ENCODE measurements at regions of chr7 and their contacts with region 1.

Region 1: GRCh38 chr7:29189743-29190201 is 4.8 kb upstream of the CHN2 start:
- DNase-seq: peak; percentile 93 to 94
- H3K4me3 ChIP-seq: peak overlapping the region in 1 of 4 experiments; percentile 31; a peak in 2 of 8 replicates
- H3K27ac ChIP-seq: no peak overlapping the region
- H3K4me1 ChIP-seq: peaks cover 0 to 11% (median 7%) of the 10 kb centered on the region in 4 experiments; a peak in 4 of 7 replicates
- H3K27me3 ChIP-seq: peaks cover 14 to 36% (median 30%) of the 10 kb centered on the region in 4 experiments
- CTCF ChIP-seq: peak; percentile 91 to 97 (median 94)
- EP300 ChIP-seq: peak; percentile 35 to 85; a peak in 2 of 3 replicates
- POLR2A ChIP-seq: no peak
- RAD21 ChIP-seq: peak; percentile 82 to 91

Region 2: DNA sequence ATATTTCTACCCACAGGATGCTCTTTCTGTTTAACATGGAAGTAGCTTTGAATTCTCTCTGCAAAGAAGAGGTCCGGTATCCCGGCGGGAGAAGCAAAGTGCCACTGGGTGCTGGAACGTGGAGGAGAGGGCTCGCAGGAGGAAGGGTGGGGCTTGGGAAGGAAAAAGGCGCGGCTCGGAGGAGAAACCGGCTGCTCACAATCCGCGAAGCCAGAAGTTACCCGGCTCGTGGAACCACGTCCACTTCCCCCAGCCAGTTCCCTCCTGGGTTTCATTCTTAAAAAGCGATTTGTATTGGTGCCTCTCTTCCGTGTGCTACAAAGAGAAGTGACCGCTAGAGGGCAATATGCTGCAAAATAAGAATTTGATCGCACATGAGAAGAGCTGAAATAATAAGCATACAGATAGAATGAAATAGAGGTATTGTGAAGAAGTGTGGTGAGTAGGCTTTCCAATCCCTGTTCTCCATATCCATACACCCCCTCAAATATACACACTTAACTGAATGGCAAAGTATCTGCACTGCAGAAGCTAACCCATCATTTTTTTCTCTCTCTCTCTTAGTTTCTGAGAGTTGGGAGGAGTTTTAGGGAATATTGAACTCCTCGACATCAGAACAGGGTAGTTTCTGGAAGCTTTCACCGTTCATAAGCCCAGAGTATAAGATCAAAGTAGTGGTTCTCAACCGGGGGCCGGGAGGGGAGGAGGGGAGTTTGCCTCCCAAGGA is 262.7 kb before region 1 on chr7:
- CTCF ChIA-PET with region 1: interaction called, 10 read pairs
- POLR2A ChIA-PET with region 1: no interaction called
- DNase-seq: peak in 1 of 2 experiments; percentile 66
- H3K4me3 ChIP-seq: peak overlapping the region; percentile 24 to 62 (median 40); a peak in 6 of 8 replicates
- H3K27ac ChIP-seq: no peak overlapping the region
- H3K4me1 ChIP-seq: peaks cover 0 to 8% (median 1%) of the 10 kb centered on the region in 4 experiments; a peak in 3 of 7 replicates
- H3K27me3 ChIP-seq: no peaks in the 10 kb centered on the region
- CTCF ChIP-seq: peak in 2 of 3 experiments; percentile 69 to 81; a peak in 3 of 4 replicates
- EP300 ChIP-seq: no peak
- POLR2A ChIP-seq: 0 out of 3 replicates have a peak, but pooled peaks of 1 of the 2 experiments have one; percentile 44
- RAD21 ChIP-seq: peak; percentile 74 to 79

Region 3: DNA sequence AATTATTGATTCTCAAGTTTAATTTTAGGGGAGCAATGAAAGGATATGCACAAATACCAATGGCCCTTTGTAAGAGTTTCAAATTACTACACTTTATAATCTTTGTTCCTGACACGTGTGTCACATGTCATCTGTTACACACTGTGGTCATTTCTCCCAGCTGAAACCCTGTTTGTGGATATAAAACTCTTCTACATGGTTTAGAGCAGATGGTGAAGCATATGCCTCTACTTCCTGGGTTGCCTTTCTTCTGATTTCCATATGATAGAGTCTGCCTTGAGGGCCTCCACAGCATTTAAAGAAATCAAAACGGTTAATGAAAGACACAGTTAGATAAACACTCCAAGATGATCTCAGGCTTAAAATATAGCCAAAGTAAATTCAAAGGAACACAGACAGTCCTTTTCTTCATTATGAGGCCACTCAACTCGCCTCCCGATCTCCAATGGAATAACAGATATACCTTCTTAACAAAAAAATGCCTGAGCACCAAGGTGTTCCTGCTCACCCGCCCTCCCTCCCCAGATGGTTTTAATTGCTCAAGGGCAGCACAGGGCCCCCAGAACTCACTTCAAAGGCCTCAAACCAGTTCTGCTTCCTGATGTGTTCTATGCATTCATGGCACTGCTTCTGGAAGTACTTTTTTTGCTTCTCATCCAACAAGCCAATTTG is 118.4 kb before region 1 on chr7:
- CTCF ChIA-PET with region 1: no interaction called
- POLR2A ChIA-PET with region 1: no interaction called
- DNase-seq: no peak
- H3K4me3 ChIP-seq: no peak overlapping the region
- H3K27ac ChIP-seq: no peak overlapping the region
- H3K4me1 ChIP-seq: 0 out of 7 replicates have a peak, but pooled peaks cover 0 to 5% (median 0%) of the 10 kb centered on the region in 4 experiments
- H3K27me3 ChIP-seq: no peaks in the 10 kb centered on the region
- CTCF ChIP-seq: no peak
- EP300 ChIP-seq: no peak
- POLR2A ChIP-seq: no peak
- RAD21 ChIP-seq: no peak

Region 4: GRCh38 chr7:29095631-29096445 is 93.9 kb before region 1 on chr7:
- CTCF ChIA-PET with region 1: no interaction called
- POLR2A ChIA-PET with region 1: no interaction called
- DNase-seq: no peak
- H3K4me3 ChIP-seq: no peak overlapping the region
- H3K27ac ChIP-seq: no peak overlapping the region
- H3K4me1 ChIP-seq: peaks cover 0 to 2% (median 0%) of the 10 kb centered on the region in 4 experiments; a peak in 1 of 7 replicates
- H3K27me3 ChIP-seq: no peaks in the 10 kb centered on the region
- CTCF ChIP-seq: no peak
- EP300 ChIP-seq: no peak
- POLR2A ChIP-seq: no peak
- RAD21 ChIP-seq: no peak

Region 5: DNA sequence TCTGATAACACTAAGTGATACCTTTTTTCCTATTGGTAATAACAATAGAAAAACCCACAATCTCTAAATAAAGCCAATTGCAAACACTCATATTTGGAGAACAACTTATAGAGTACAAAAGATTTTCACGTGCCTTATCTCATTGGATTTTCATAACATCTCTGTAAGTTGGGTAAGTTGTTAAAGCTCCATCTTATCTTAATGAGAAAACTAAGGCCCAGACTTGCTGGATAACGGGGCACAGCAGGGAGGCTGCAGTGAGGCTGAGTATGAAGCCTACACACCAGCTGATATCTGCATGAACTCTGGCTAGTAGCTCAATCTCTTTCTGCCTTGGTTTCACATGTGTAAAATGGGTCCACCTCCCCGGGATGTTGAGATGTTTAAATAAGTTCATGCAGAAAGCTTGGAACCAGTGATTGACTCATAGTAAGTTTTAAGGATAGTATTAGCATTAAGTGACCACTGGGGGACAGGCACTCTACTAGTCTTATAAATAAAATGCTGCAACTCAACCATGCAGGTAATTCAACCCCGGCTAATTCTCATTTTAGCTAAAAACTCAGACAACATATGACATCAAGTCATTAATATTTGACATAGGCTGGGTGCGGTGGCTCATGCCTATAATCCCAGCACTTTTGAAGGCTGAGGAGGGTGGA is 70.1 kb before region 1 on chr7:
- CTCF ChIA-PET with region 1: interaction called, 16 read pairs
- POLR2A ChIA-PET with region 1: no interaction called
- DNase-seq: no peak
- H3K4me3 ChIP-seq: no peak overlapping the region
- H3K27ac ChIP-seq: no peak overlapping the region
- H3K4me1 ChIP-seq: peaks cover 0 to 3% (median under 1%) of the 10 kb centered on the region in 4 experiments; a peak in 2 of 7 replicates
- H3K27me3 ChIP-seq: no peaks in the 10 kb centered on the region
- CTCF ChIP-seq: no peak
- EP300 ChIP-seq: no peak
- POLR2A ChIP-seq: no peak
- RAD21 ChIP-seq: no peak

Region 6: DNA sequence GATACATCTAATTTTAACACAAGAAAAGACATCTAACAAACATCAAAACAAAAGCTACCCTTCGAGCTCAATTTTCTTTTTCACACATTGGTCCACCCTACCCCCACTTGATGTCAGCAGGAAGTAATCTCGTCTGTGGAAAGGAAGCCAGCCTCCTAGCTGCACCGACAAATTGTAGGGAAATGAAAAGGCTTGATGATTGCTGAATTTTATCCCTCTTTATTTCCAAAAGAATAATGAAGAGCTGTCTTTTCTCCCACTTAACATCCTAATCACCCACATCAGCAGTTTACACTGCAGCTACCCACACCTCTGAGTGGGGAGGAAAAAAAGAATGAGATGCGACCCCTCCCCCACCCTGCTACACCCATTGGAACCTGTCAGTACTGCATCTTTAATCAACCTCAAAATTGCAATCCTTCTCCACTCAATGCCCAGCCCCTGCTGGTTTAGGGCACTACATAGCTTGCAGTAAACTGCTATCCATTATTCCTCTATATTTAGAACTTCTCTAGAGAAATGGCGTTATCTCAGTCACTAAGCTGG is 32.8 kb before region 1 on chr7:
- CTCF ChIA-PET with region 1: interaction called, 26 read pairs
- POLR2A ChIA-PET with region 1: interaction called, 3 read pairs
- DNase-seq: no peak
- H3K4me3 ChIP-seq: no peak overlapping the region
- H3K27ac ChIP-seq: no peak overlapping the region
- H3K4me1 ChIP-seq: peaks cover 0 to 8% (median 6%) of the 10 kb centered on the region in 4 experiments; a peak in 3 of 7 replicates
- H3K27me3 ChIP-seq: no peaks in the 10 kb centered on the region
- CTCF ChIP-seq: no peak
- EP300 ChIP-seq: no peak
- POLR2A ChIP-seq: no peak
- RAD21 ChIP-seq: no peak

Region 7: GRCh38 chr7:29239638-29240037 is 49.9 kb after region 1 on chr7:
- CTCF ChIA-PET with region 1: interaction called, 10 read pairs
- POLR2A ChIA-PET with region 1: interaction called, 3 read pairs
- DNase-seq: peak; percentile 13 to 58
- H3K4me3 ChIP-seq: no peak overlapping the region
- H3K27ac ChIP-seq: no peak overlapping the region
- H3K4me1 ChIP-seq: peaks cover 0 to 3% (median 1%) of the 10 kb centered on the region in 4 experiments; a peak in 2 of 7 replicates
- H3K27me3 ChIP-seq: no peaks in the 10 kb centered on the region
- CTCF ChIP-seq: peak; percentile 65 to 85 (median 82)
- EP300 ChIP-seq: no peak
- POLR2A ChIP-seq: no peak
- RAD21 ChIP-seq: peak; percentile 61 to 72

Region 8: GRCh38 chr7:29345600-29345999 is 155.8 kb after region 1 on chr7:
- CTCF ChIA-PET with region 1: interaction called, 20 read pairs
- POLR2A ChIA-PET with region 1: no interaction called
- DNase-seq: peak; percentile 44 to 66
- H3K4me3 ChIP-seq: no peak overlapping the region
- H3K27ac ChIP-seq: no peak overlapping the region
- H3K4me1 ChIP-seq: no peaks in the 10 kb centered on the region; a peak in 1 of 7 replicates
- H3K27me3 ChIP-seq: no peaks in the 10 kb centered on the region
- CTCF ChIP-seq: peak; percentile 64 to 83 (median 77)
- EP300 ChIP-seq: no peak
- POLR2A ChIP-seq: no peak
- RAD21 ChIP-seq: peak; percentile 90 to 92

Region 9: DNA sequence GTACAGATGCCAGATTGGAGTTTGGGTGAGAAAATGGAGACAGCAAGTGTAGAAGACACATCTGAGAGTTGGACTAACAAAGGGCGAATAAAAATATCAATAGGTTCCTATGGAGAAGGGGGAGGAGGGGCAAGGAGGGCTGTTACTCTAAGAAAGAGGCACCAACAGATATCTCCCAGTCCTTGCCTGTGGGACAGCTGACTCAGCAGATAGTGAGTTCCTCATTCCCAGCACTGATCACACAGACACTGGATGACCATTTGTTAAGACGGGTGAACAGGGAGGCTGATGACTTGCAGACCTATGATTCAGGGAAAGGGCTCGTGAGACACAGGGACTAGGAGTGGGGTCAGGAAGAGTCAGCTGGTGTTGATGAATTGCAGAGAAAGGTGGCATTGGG is 368.2 kb after region 1 on chr7:
- CTCF ChIA-PET with region 1: no interaction called
- POLR2A ChIA-PET with region 1: no interaction called
- DNase-seq: no peak
- H3K4me3 ChIP-seq: peak overlapping the region in 1 of 4 experiments; percentile 23; a peak in 1 of 8 replicates
- H3K27ac ChIP-seq: no peak overlapping the region; the same call in 1 of the 2 replicates
- H3K4me1 ChIP-seq: peaks cover 0 to 19% (median 13%) of the 10 kb centered on the region in 4 experiments; a peak in 4 of 7 replicates
- H3K27me3 ChIP-seq: peaks cover 0 to 5% (median 3%) of the 10 kb centered on the region in 4 experiments; a peak in 4 of 7 replicates
- CTCF ChIP-seq: no peak
- EP300 ChIP-seq: no peak
- POLR2A ChIP-seq: no peak
- RAD21 ChIP-seq: no peak

Region 10: DNA sequence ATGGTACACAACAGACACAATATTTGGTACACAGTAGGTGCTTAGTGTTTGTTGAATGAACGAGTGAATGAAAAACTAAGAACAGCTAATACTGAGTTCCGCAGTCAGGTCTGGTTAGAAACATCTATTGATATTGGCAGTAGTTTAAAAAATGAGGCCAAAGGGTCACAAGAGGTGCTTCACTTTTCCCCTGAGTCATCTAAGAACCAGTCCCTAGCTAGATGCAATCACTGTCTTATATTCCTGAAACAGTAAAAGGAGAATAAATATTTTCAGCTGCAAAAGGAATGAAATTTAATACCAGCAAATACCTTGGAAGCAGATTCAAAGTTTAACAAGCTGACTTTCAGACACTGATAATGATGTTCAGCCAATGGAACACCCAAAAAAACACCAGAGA is 745.3 kb after region 1 on chr7:
- CTCF ChIA-PET with region 1: no interaction called
- POLR2A ChIA-PET with region 1: no interaction called
- DNase-seq: no peak
- H3K4me3 ChIP-seq: no peak overlapping the region
- H3K27ac ChIP-seq: no peak overlapping the region
- H3K4me1 ChIP-seq: no peaks in the 10 kb centered on the region
- H3K27me3 ChIP-seq: no peaks in the 10 kb centered on the region
- CTCF ChIP-seq: no peak
- EP300 ChIP-seq: no peak
- POLR2A ChIP-seq: no peak
- RAD21 ChIP-seq: no peak

Measured in H1 (cell line).